ENCODE measurements at regions of chr5 and their contacts with region 1.

Region 1: DNA sequence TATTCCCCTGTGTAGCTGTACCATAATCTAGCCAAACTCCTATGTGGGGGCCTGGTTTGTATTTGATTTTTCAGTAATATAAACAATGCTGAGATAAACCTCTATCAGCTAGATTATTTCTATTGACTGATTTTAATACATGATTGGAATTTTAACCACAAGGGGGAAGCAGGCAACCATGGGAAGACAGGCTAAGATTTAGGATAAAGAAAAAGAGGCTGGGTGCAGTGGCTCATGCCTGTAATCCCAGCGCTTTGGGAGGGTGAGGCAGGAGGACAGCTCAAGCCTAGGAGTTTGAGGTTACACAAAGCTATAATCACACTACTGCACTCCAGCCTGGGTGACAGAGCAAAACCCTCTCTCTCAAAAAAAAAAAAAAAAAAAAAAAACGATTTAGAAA is 18.1 kb upstream of the GPX3 start:
- DNase-seq: peak in 5 of 7 donors; percentile 30 to 58 (median 43)
- H3K4me3 ChIP-seq: no peak overlapping the region
- H3K27ac ChIP-seq: no peak overlapping the region
- H3K4me1 ChIP-seq: peaks cover 22 to 29% of the 10 kb centered on the region in 2 donors
- H3K27me3 ChIP-seq: no peaks in the 10 kb centered on the region
- CTCF ChIP-seq: peak; percentile 41 to 83 (median 74)
- POLR2A ChIP-seq: no peak

Region 2: DNA sequence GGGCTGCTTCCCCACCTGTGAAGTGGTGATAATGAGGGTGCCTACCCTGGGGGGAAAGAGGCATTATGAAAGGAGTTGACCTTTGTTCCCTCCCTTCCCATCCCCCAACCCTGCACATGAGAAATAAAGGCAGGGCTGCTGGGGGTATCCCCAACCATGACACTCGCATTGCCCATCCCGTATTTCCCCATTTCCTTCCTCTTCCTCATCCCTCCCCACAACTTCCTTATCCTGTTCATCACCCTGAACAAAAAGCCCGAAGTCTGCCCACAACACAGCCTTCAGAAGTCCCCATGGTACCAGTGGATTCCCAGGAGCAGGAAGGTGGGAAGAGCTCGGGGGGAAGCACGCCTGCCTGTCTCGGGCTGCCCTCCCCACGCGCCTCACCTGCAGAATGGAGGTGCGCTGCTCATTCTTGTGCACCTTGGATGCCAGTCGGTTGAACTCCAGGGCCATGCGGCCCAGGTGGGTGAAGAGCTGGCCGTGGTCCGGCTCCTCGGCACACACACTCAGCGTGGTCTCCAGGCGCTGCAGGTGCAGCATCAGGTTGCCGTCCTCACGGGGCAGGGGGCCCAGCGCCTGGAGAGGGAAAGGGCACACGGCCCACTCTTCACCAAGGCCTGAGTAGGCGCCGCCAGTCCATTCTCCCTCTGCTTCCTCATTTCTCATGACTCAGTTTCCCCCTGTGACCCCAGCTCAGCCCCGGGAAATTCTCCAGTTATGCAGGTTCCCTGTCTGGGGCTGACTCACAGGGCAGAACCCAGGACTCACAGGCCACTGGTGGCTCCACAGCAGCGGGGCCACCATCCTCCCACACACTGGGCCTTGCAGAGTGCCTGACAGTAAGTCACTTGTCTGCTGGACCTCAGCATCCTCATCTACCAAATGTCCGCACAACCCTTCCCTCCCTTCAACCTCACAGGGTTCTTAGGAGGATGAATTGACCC is 54.4 kb after region 1 on chr5:
- intact Hi-C with region 1: no loop called
- DNase-seq: no peak
- H3K4me3 ChIP-seq: no peak overlapping the region
- H3K27ac ChIP-seq: no peak overlapping the region
- H3K4me1 ChIP-seq: peaks cover 18 to 26% of the 10 kb centered on the region in 2 donors
- H3K27me3 ChIP-seq: no peaks in the 10 kb centered on the region
- CTCF ChIP-seq: no peak
- POLR2A ChIP-seq: no peak

Region 3: GRCh38 chr5:151110122-151110681 is 108.0 kb after region 1 on chr5:
- intact Hi-C with region 1: loop called (anchors 5 kb)
- DNase-seq: no peak
- H3K4me3 ChIP-seq: no peak overlapping the region
- H3K27ac ChIP-seq: no peak overlapping the region
- H3K4me1 ChIP-seq: peaks cover 5 to 9% of the 10 kb centered on the region in 2 donors
- H3K27me3 ChIP-seq: no peaks in the 10 kb centered on the region
- CTCF ChIP-seq: no peak
- POLR2A ChIP-seq: no peak

Region 4: DNA sequence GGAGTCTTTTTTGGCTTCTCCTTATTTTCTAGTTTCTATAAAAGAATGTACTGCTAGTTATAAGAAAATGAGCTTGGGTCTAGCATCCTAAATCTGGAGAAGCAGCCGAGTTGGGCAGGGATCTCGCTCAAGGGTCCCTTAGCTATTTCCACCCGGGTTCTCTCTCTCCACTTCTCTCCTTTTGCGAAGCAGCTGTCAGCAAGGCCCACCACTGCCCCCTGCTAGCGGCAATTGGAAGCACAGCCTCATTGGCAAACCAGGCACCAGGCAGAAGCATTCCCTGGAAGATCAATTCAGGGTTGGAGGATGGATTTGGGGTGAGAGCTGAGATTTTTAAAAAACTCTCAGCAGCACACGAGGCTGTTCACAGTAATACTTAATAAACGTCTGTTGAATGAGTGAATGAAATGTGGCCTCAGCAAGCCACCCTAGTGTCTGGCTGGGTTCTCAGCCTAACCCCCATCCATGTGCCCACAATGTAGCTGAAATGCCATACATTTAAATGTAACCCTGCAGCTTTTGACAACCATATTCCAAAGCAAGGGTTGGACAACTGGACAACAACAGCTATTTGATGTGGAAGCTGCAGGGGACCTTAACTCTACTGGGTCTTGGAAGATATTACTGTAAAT is 113.1 kb after region 1 on chr5:
- intact Hi-C with region 1: loop called (anchors 5 kb)
- DNase-seq: peak; percentile 68 to 89 (median 82)
- H3K4me3 ChIP-seq: no peak overlapping the region
- H3K27ac ChIP-seq: no peak overlapping the region
- H3K4me1 ChIP-seq: peaks cover 0 to 11% of the 10 kb centered on the region in 2 donors
- H3K27me3 ChIP-seq: no peaks in the 10 kb centered on the region
- CTCF ChIP-seq: peak; percentile 90 to 96 (median 94)
- POLR2A ChIP-seq: no peak

Measured in adrenal gland (tissue), 19 donors.